Activated naive CD4-positive, alpha-beta T cell treated with anti-CD3 and anti-CD28 coated beads for 36 hours (primary cell): ENCODE measurements at regions of chr1 and their contacts with region 1.

Region 1: GRCh38 chr1:226940029-226940805 is at the start of gene COQ8A:
- DNase-seq: peak; percentile 99
- H3K4me3 Mint-ChIP-seq: peak within 1 kb of the TSS; percentile 82
- H3K27ac Mint-ChIP-seq: peak within 1 kb of the TSS; percentile 90
- H3K4me1 Mint-ChIP-seq: peaks cover 48% of the 10 kb centered on the region
- H3K27me3 Mint-ChIP-seq: no peaks in the 10 kb centered on the region
- total RNA-seq, gene COQ8A: 24.8 to 26.5 TPM

Region 2: GRCh38 chr1:226626577-226626956 is 313.6 kb before region 1 on chr1:
- CTCF ChIA-PET with region 1: no interaction called
- intact Hi-C with region 1: loop called (anchors 1 kb)
- DNase-seq: peak; percentile 90
- H3K4me3 Mint-ChIP-seq: peak overlapping the region; percentile 10
- H3K27ac Mint-ChIP-seq: peak overlapping the region; percentile 68
- H3K4me1 Mint-ChIP-seq: peaks cover 25% of the 10 kb centered on the region
- H3K27me3 Mint-ChIP-seq: no peaks in the 10 kb centered on the region

Region 3: DNA sequence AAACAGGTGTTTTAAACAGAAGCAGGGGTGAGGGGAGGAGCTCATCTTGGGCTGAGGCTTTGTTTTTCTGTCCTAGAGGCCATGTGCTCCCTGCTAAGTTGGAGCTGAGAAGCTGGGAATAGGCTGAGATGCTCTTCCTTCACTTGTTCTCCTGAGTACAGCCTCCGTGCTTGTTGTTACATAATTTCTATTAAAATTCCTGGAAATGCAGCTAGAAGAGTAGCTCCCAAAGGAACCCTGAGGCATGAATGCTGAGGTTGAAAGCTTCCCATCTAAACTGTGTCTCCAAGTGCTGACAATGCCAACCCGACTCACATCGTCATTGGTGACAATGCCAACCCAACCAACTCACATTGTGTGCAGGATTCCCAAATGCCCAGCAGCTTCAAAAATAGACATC is 188.5 kb before region 1 on chr1:
- CTCF ChIA-PET with region 1: no interaction called
- intact Hi-C with region 1: no loop called
- DNase-seq: no peak
- H3K4me3 Mint-ChIP-seq: no peak overlapping the region
- H3K27ac Mint-ChIP-seq: no peak overlapping the region
- H3K4me1 Mint-ChIP-seq: peaks cover 23% of the 10 kb centered on the region
- H3K27me3 Mint-ChIP-seq: no peaks in the 10 kb centered on the region

Region 4: GRCh38 chr1:226990133-226990716 is 50.0 kb after region 1 on chr1:
- CTCF ChIA-PET with region 1: interaction called, 3 read pairs
- intact Hi-C with region 1: loop called (anchors 5 kb)
- DNase-seq: peak; percentile 86
- H3K4me3 Mint-ChIP-seq: no peak overlapping the region
- H3K27ac Mint-ChIP-seq: peak overlapping the region; percentile 57
- H3K4me1 Mint-ChIP-seq: peaks cover 19% of the 10 kb centered on the region
- H3K27me3 Mint-ChIP-seq: no peaks in the 10 kb centered on the region

Region 5: GRCh38 chr1:227563324-227564201 is 623.3 kb after region 1 on chr1 and contains the start of gene ZNF678:
- CTCF ChIA-PET with region 1: no interaction called
- intact Hi-C with region 1: loop called (anchors 5 kb)
- DNase-seq: peak; percentile 96
- H3K4me3 Mint-ChIP-seq: peak within 1 kb of the TSS; percentile 94
- H3K27ac Mint-ChIP-seq: peak within 1 kb of the TSS; percentile 93
- H3K4me1 Mint-ChIP-seq: peaks cover 37% of the 10 kb centered on the region
- H3K27me3 Mint-ChIP-seq: peaks cover 26% of the 10 kb centered on the region
- total RNA-seq, gene ZNF678: 9.5 TPM

Region 6: GRCh38 chr1:227787513-227788270 is 847.5 kb after region 1 on chr1:
- CTCF ChIA-PET with region 1: no interaction called
- intact Hi-C with region 1: loop called (anchors 1 kb)
- DNase-seq: peak; percentile 95
- H3K4me3 Mint-ChIP-seq: peak overlapping the region; percentile 73
- H3K27ac Mint-ChIP-seq: no peak overlapping the region
- H3K4me1 Mint-ChIP-seq: peaks cover 19% of the 10 kb centered on the region
- H3K27me3 Mint-ChIP-seq: peaks cover 2% of the 10 kb centered on the region

Region 7: DNA sequence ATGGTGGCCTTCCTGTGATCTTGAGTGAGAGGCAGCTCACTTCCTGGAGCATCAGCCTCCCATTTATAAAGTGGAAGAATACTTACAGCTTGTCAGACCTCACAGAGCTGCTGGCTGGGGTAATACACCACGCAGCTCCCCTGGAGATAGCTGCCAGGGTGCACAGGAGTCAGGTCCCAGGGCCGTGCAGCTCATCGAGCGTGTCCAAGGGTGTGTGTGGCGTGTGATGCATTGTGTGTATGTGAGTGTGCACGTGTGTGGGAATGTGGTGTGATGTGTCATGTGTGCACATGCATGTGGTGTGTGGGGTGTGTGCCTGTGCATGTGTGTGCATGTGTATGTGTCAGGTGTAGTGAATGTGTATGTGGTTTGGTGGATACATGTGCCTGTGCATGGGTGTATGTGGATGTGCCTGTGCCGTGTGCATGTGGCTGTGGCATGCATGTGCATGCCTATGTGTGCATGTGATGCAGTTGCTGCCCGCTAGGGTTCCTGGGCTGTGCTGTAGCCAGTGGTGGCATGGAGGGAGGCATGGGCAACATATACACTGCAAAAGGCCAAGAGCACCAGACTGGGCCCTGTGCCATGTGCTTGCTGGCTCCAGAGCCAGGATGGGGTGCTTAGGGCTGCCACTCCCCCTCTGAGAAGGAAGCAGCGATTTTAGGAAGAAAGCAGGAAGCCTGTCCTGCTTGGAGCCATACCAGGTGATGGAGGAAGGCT is 1091.2 kb after region 1 on chr1:
- CTCF ChIA-PET with region 1: no interaction called
- intact Hi-C with region 1: no loop called
- DNase-seq: no peak
- H3K4me3 Mint-ChIP-seq: no peak overlapping the region
- H3K27ac Mint-ChIP-seq: no peak overlapping the region
- H3K4me1 Mint-ChIP-seq: no peaks in the 10 kb centered on the region
- H3K27me3 Mint-ChIP-seq: peaks cover 22% of the 10 kb centered on the region